Activated CD8-positive, alpha-beta memory T cell treated with anti-CD3 and anti-CD28 coated beads, Interleukin-2, amount 10 ng/mL, durations not matched to agents 7 days and 5 days (primary cell): ENCODE measurements at regions of chr12 and their contacts with region 1.

Region 1: GRCh38 chr12:52221912-52222457 is 11.1 kb upstream of the KRT7 start:
- DNase-seq: peak; percentile 84
- ATAC-seq: peak; percentile 80
- H3K4me3 Mint-ChIP-seq: no peak overlapping the region
- H3K27ac Mint-ChIP-seq: no peak overlapping the region
- H3K4me1 Mint-ChIP-seq: peaks cover 8% of the 10 kb centered on the region
- H3K27me3 Mint-ChIP-seq: peaks cover 74% of the 10 kb centered on the region

Region 2: DNA sequence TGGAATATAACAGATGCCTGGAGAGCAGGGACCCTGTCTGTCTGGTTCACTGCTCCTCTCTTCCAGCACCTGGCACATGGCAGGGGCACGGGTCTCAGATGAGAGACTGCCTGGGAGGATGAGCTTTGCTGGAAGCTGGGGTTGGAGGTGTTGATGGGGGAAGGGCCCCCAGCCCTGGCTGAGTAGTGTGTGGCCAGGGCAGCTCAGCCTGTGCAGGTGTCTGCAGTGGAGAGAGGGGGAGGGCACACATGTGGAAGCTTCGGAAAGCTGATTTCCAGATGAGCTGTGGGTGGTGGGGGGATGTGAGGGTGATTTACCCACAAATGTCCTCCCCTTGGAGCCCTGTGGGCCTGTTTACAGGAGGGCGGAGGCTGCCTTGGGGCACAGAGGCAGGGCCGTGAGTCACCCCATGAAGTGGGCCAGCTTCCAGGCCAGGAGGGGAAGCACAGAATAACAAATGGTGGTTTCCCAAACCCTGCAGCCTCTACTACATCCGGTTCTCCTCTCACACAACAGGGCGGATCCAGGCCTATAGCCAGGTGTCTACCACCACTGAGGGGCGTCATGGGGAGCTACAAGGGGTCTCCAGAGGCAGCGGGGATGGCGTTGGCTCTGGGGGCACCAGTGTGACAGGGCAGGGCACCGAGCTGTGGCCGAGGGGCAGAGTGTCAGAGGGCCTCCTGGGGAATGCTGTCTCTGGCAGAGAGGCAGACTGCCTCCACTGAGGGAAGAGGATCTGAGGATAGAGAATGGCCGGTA is 22.1 kb after region 1 on chr12:
- CTCF ChIA-PET with region 1: interaction called, 19 read pairs
- DNase-seq: peak; percentile 81
- ATAC-seq: peak; percentile 92
- H3K4me3 Mint-ChIP-seq: peak overlapping the region; percentile 39
- H3K27ac Mint-ChIP-seq: peak overlapping the region; percentile 85
- H3K4me1 Mint-ChIP-seq: peaks cover 56% of the 10 kb centered on the region
- H3K27me3 Mint-ChIP-seq: peaks cover 5% of the 10 kb centered on the region